MCF 10A (cell line): ENCODE measurements at regions of chr3 and their contacts with region 1.

Region 1: GRCh38 chr3:129249276-129250065 is at the start of gene COPG1:
- DNase-seq: peak; percentile 89
- H3K4me3 Mint-ChIP-seq: peak within 1 kb of the TSS; percentile 93
- H3K27ac Mint-ChIP-seq: peak within 1 kb of the TSS; percentile 98
- H3K4me1 Mint-ChIP-seq: peaks cover 27% of the 10 kb centered on the region
- H3K27me3 Mint-ChIP-seq: no peaks in the 10 kb centered on the region
- CTCF ChIP-seq: no peak
- total RNA-seq, gene COPG1: 225 and 298 TPM in 2 replicates

Region 2: DNA sequence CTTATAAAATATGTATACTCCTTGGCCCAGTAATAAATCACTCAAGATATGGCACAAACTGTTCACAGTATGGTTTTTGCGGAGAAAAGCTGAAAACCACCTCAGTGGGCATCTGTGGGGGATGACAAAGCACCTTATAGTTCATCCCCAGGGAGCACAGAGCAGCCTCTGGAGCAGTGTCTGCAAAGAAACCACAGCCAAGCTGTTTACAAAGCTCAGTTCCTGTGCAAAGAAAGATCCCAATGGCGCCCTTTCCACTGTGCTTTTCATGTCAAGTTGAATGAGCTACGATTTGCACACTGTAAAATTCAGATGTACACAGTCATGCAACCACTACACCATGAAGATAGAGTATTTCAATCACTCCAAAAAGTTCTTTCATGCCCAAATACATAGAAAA is 250.9 kb before region 1 on chr3:
- CTCF ChIA-PET with region 1: no interaction called
- POLR2A ChIA-PET with region 1: no interaction called
- intact Hi-C with region 1: no loop called
- DNase-seq: no peak
- H3K4me3 Mint-ChIP-seq: no peak overlapping the region
- H3K27ac Mint-ChIP-seq: no peak overlapping the region
- H3K4me1 Mint-ChIP-seq: no peaks in the 10 kb centered on the region
- H3K27me3 Mint-ChIP-seq: peaks cover 39% of the 10 kb centered on the region
- CTCF ChIP-seq: no peak

Region 3: GRCh38 chr3:129026728-129027543 is 222.5 kb before region 1 on chr3:
- CTCF ChIA-PET with region 1: no interaction called
- POLR2A ChIA-PET with region 1: no interaction called
- intact Hi-C with region 1: loop called (anchors 10 kb)
- DNase-seq: peak; percentile 80
- H3K4me3 Mint-ChIP-seq: peak overlapping the region; percentile 56
- H3K27ac Mint-ChIP-seq: no peak overlapping the region
- H3K4me1 Mint-ChIP-seq: no peaks in the 10 kb centered on the region
- H3K27me3 Mint-ChIP-seq: peaks cover 16% of the 10 kb centered on the region
- CTCF ChIP-seq: peak; percentile 41

Region 4: DNA sequence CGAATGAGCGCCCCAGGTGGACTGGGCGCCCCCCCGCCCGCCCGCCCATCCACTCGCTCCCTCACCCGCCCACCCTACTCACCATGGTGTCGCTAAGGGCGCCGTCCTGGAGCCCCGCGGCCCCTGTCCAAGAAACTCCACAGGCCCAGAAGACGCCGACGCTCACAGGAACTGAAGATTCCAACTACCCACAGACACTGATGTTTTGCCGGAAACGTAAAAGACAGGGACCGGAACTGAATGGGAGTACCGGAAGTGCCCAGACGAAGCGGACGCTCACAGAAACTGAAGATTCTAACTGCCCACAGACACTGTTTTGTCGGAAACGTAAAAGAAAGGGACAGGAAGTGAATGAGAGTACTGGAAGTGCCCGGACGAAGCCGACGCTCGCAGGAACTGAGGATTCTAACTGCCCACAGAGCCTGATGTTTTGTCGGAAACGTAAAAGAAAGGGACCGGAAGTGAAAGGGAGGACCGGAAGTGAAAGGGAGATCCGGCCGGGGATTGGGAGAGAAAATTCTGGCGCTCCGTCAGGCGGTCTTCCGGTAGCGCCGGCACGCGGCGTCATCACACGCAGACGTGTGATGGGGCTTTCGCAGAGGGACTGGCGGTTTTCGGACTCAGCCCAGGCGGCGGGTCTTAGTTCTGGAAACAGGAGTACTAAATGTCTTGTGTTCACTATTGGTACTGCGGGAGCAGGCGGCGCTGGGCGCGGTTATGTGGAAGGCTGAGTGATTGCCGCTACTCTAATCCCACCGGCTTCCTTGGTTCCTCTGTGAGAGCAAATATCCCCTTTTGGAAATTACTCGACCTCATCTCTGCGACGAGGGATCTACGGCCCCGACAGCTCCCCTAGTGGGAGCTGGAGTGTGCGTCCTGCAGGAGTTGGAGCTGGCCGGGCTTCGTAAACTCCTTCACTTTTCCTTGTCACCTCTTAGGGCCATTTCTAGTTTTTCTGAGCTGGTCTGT is 88.3 kb before region 1 on chr3 and contains the start of gene ISY1:
- CTCF ChIA-PET with region 1: interaction called, 50 read pairs
- POLR2A ChIA-PET with region 1: no interaction called
- intact Hi-C with region 1: loop called (anchors 1 kb)
- DNase-seq: peak; percentile 96
- H3K4me3 Mint-ChIP-seq: peak within 1 kb of the TSS; percentile 98
- H3K27ac Mint-ChIP-seq: peak within 1 kb of the TSS; percentile 100
- H3K4me1 Mint-ChIP-seq: peaks cover 31% of the 10 kb centered on the region
- H3K27me3 Mint-ChIP-seq: no peaks in the 10 kb centered on the region
- CTCF ChIP-seq: peak; percentile 60
- total RNA-seq, gene ISY1: 52.5 and 57.8 TPM in 2 replicates

Region 5: GRCh38 chr3:129183569-129184395 is 65.7 kb before region 1 on chr3 and contains the start of gene CNBP:
- CTCF ChIA-PET with region 1: interaction called, 78 read pairs
- POLR2A ChIA-PET with region 1: interaction called, 217 read pairs
- intact Hi-C with region 1: loop called (anchors 1 kb)
- DNase-seq: peak; percentile 95
- H3K4me3 Mint-ChIP-seq: peak within 1 kb of the TSS; percentile 84
- H3K27ac Mint-ChIP-seq: peak within 1 kb of the TSS; percentile 96
- H3K4me1 Mint-ChIP-seq: peaks cover 13% of the 10 kb centered on the region
- H3K27me3 Mint-ChIP-seq: no peaks in the 10 kb centered on the region
- CTCF ChIP-seq: no peak
- total RNA-seq, gene CNBP: 519 and 557 TPM in 2 replicates

Region 6: DNA sequence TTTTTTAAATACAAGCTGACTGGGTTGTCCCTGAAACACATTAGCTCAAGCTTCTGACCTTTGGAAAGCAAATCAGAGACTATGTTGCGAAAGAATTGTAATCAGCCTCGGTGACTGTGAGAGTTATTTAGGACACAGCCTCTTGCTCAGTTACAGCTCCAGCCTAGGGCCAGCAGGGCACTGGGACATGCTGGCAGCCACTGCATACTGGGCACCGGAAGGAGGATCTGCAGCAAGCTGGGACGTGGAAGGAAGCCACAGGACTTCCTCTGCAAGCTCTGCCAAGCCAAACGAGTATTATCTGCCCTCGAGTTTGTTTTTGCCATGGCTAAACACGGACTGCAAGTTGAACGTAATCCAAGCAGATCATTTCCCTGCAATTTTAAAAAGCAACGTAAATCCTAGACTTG is 24.5 kb before region 1 on chr3:
- CTCF ChIA-PET with region 1: interaction called, 39 read pairs
- POLR2A ChIA-PET with region 1: interaction called, 36 read pairs
- intact Hi-C with region 1: no loop called
- DNase-seq: peak; percentile 91
- H3K4me3 Mint-ChIP-seq: peak overlapping the region; percentile 41
- H3K27ac Mint-ChIP-seq: peak overlapping the region; percentile 80
- H3K4me1 Mint-ChIP-seq: peaks cover 23% of the 10 kb centered on the region
- H3K27me3 Mint-ChIP-seq: no peaks in the 10 kb centered on the region
- CTCF ChIP-seq: no peak

Region 7: DNA sequence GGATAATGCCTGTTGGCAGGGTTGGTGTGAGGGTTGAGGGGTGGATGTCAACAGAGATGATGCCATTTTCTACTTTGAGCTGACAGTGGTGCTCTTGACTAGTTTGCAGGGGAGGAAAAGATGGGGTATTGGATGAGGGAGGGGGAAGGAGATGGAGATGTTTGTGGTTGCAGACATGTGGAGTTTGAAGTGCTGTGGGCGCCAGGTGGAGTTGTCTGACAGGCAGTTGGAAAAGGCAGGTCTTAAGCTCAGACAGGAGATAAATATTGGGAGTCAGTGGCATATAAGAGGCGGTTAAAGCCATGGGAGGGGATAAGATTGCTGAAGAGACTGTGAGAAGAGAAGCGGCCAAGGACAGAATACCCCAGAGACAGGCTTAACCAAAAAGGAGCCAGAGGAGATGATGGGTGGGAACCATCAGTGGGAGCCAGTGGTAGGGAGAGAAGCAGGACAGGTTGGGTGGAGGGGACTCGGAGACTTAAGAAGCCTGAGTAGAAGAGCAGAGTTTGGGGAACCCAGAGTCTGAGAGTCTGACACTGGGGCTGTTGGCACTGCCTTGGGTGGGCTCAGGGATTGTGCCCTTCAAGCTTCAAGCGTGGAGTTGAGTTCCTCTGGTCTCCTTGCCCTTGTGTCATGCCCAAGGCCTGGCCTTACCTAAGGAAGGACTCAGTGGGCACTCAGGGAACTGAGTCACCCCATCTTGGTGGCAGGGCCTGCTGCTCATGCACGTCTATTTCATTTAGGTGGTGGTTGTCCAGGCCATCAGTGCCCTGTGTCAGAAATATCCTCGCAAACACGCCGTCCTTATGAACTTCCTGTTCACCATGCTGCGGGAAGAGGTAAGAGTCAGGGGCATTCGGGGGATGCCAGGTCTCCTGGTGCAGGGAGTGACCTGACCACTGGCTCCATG is 13.9 kb after region 1 on chr3:
- CTCF ChIA-PET with region 1: interaction called, 8 read pairs
- POLR2A ChIA-PET with region 1: interaction called, 12 read pairs
- intact Hi-C with region 1: no loop called
- DNase-seq: no peak
- H3K4me3 Mint-ChIP-seq: no peak overlapping the region
- H3K27ac Mint-ChIP-seq: peak overlapping the region; percentile 93
- H3K4me1 Mint-ChIP-seq: peaks cover 5% of the 10 kb centered on the region
- H3K27me3 Mint-ChIP-seq: no peaks in the 10 kb centered on the region
- CTCF ChIP-seq: no peak